Sigmoid colon (tissue), 7 donors: ENCODE measurements at regions of chr19 and their contacts with region 1.

Region 1: GRCh38 chr19:37370880-37371661 is at the start of gene ZNF527:
- DNase-seq: peak; percentile 98
- H3K4me3 ChIP-seq: peak within 1 kb of the TSS; percentile 64 to 74 (median 66)
- H3K27ac ChIP-seq: peak within 1 kb of the TSS; percentile 83 to 91 (median 86)
- H3K4me1 ChIP-seq: peaks cover 0 to 14% (median 6%) of the 10 kb centered on the region in 4 donors
- H3K27me3 ChIP-seq: no peaks in the 10 kb centered on the region
- CTCF ChIP-seq: no peak
- EP300 ChIP-seq: peak in 1 of 4 donors; percentile 31
- POLR2A ChIP-seq: peak in 1 of 2 donors; percentile 90
- total RNA-seq, gene ZNF527: 6.1 to 13.8 (median 9.7) TPM

Region 2: DNA sequence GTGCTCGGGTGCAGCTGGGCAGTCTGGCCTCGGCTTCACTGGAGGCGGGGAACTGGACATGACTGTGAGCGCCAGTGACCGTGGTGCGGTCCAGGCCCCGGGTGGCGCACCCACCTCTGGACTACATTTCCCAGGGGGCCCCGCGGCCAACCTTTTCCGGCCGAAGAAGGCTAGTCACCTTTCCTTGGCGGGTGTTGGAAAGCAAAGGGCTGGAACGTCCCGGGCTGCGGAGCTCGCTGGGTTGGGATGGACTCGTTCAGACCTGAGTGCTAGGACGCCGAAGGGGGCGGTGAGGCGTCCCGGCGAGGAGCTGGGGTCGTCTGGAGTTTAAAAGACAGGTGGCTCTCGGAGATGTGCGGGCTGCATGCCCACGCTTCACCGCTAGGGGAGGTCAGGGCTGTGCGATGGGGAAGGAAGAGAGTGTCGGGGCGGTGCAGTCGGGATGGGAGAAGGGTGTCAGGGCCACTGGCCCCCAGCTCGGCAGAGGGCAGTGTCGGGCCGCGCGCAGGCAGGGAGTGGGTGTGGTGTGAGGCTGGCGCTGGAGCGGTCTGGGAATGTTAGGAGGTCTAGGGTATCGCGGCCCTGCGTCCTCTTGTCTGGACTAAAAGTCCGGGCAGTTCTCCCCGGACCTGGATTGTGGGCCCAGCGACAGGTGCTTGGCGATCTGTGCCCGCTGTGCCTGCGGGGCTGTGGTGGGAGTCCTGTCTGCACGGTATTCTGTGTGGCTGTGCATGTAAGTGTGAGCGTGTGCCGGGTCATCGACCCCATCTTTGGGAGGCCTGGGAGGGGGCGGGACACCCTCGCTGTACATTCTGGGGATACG is 397.8 kb before region 1 on chr19:
- intact Hi-C with region 1: loop called (anchors 2 kb)
- DNase-seq: peak; percentile 92
- H3K4me3 ChIP-seq: peak overlapping the region; percentile 56 to 74 (median 64)
- H3K27ac ChIP-seq: peak overlapping the region; percentile 80 to 88 (median 86)
- H3K4me1 ChIP-seq: peaks cover 0 to 16% (median 14%) of the 10 kb centered on the region in 4 donors
- H3K27me3 ChIP-seq: no peaks in the 10 kb centered on the region
- CTCF ChIP-seq: peak; percentile 95 to 99 (median 98)
- EP300 ChIP-seq: no peak
- POLR2A ChIP-seq: no peak

Region 3: DNA sequence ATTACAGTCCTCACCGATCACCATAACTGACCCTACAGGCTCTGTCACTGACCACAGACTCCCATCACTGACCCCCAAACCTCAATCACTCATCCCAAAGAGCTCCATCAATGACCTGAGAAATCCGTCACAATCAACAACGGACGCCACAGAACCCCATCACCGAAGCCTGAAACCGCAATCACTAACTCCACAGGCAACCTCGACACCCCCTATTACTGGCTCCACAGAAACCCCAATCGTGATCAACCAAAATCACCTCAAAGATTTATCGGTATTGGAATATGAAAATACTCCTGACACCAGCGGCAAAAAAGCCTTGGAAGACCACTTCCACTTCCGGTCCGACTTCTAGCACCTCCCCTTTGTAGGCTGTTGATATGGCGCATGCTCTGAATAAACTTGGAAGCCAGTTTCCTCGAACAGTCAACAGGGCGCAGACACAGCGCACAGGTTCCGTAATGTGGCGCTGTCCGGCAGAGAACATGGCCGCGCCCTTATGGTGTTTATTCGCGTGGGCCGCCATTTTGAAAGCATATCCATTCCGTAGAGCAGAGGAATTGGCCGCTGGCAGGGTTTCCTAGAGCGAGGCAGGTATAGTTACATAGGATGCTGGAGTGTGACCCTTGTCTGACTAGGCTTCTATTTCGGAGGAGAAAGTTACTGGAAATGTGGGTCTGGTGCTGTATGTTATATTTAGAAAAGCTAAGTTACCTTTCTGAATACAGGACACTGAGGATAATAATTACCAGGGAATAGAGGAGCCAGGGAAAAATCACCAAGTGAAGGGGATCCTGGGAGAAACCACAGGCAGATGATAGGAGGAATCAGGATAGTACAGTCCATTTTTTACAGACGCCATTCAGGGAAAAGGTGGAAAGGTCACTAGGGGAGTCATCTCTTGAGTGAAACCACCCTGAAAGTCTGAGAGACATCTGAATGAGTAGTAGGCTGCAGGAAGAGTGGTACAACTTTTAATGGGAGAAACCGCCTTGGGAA is 198.4 kb before region 1 on chr19 and contains the start of gene ZNF585A:
- intact Hi-C with region 1: loop called (anchors 2 kb)
- DNase-seq: peak; percentile 95
- H3K4me3 ChIP-seq: peak within 1 kb of the TSS; percentile 53 to 64 (median 60)
- H3K27ac ChIP-seq: peak within 1 kb of the TSS; percentile 70 to 78 (median 76)
- H3K4me1 ChIP-seq: peaks cover 0 to 8% (median 0%) of the 10 kb centered on the region in 4 donors
- H3K27me3 ChIP-seq: no peaks in the 10 kb centered on the region
- CTCF ChIP-seq: peak in 1 of 4 experiments; percentile 18
- EP300 ChIP-seq: no peak
- POLR2A ChIP-seq: no peak
- total RNA-seq, gene ZNF585A: 3.9 to 13.7 (median 7.1) TPM

Region 4: GRCh38 chr19:37334179-37335071 is 36.6 kb before region 1 on chr19:
- intact Hi-C with region 1: loop called (anchors 2 kb)
- DNase-seq: peak; percentile 96
- H3K4me3 ChIP-seq: peak overlapping the region; percentile 61 to 89 (median 72)
- H3K27ac ChIP-seq: peak overlapping the region; percentile 83 to 89 (median 86)
- H3K4me1 ChIP-seq: peaks cover 0 to 34% (median 23%) of the 10 kb centered on the region in 4 donors
- H3K27me3 ChIP-seq: no peaks in the 10 kb centered on the region
- CTCF ChIP-seq: no peak
- EP300 ChIP-seq: no peak
- POLR2A ChIP-seq: peak; percentile 54 to 62